Endothelial cell of umbilical vein (primary cell): ENCODE measurements at regions of chr7 and their contacts with region 1.

Region 1: GRCh38 chr7:30983042-30983913 is 19.5 kb downstream of the GHRHR start:
- DNase-seq: peak; percentile 75
- H3K4me3 ChIP-seq: no peak overlapping the region
- H3K27ac ChIP-seq: no peak overlapping the region
- H3K4me1 ChIP-seq: peaks cover 26% of the 10 kb centered on the region
- H3K27me3 ChIP-seq: peaks cover 4 to 5% of the 10 kb centered on the region in 2 experiments
- CTCF ChIP-seq: peak; percentile 80 to 99
- POLR2A ChIP-seq: no peak

Region 2: GRCh38 chr7:30800785-30801252 is 182.5 kb before region 1 on chr7:
- CTCF ChIA-PET with region 1: interaction called, 22 read pairs
- POLR2A ChIA-PET with region 1: no interaction called
- dilution Hi-C with region 1: no loop called
- intact Hi-C with region 1: loop called (anchors 1 kb)
- DNase-seq: peak; percentile 80
- H3K4me3 ChIP-seq: no peak overlapping the region
- H3K27ac ChIP-seq: no peak overlapping the region
- H3K4me1 ChIP-seq: peaks cover 58% of the 10 kb centered on the region
- H3K27me3 ChIP-seq: no peaks in the 10 kb centered on the region
- CTCF ChIP-seq: peak; percentile 62 to 70
- POLR2A ChIP-seq: no peak

Region 3: GRCh38 chr7:30996256-30996655 is 13.0 kb after region 1 on chr7:
- CTCF ChIA-PET with region 1: interaction called, 28 read pairs
- POLR2A ChIA-PET with region 1: no interaction called
- dilution Hi-C with region 1: no loop called
- intact Hi-C with region 1: no loop called
- DNase-seq: no peak
- H3K4me3 ChIP-seq: no peak overlapping the region
- H3K27ac ChIP-seq: no peak overlapping the region
- H3K4me1 ChIP-seq: no peaks in the 10 kb centered on the region
- H3K27me3 ChIP-seq: no peaks in the 10 kb centered on the region
- CTCF ChIP-seq: no peak
- POLR2A ChIP-seq: no peak

Region 4: DNA sequence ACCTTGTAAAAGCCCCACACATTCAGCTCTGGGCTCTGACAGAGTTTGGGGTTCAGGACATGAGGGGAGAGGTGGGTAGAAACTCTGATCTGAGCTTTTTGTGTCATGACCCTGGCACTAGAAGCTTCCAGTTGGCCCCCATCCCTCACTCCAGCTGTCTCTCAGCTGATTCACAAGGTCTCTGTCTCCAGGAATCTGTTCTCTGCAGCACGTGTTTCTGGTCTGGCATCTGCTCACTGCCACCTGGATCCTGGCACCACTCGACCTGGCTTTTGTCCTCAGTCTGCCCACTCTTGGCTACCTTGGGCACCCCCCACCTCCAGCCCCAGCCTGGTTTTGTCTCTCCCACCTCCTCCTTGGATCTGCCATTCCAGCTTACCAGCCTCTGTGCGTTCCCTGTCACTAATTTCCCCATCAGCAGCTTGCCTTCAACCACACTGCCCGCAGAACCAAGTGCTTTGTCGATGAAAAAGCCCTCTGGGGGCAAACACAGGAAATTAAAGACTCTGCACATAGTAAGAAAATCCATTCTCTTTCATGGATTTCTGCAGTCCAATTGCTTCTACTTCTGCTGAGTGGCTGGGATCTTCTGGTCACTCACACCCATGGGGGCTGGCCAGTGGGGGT is 50.5 kb after region 1 on chr7:
- CTCF ChIA-PET with region 1: interaction called, 13 read pairs
- POLR2A ChIA-PET with region 1: no interaction called
- dilution Hi-C with region 1: no loop called
- intact Hi-C with region 1: no loop called
- DNase-seq: no peak
- H3K4me3 ChIP-seq: no peak overlapping the region
- H3K27ac ChIP-seq: no peak overlapping the region
- H3K4me1 ChIP-seq: no peaks in the 10 kb centered on the region
- H3K27me3 ChIP-seq: peaks cover 2 to 8% of the 10 kb centered on the region in 2 experiments
- CTCF ChIP-seq: no peak
- POLR2A ChIP-seq: no peak

Region 5: GRCh38 chr7:31058122-31058521 is 74.8 kb after region 1 on chr7:
- CTCF ChIA-PET with region 1: interaction called, 13 read pairs
- POLR2A ChIA-PET with region 1: no interaction called
- dilution Hi-C with region 1: no loop called
- intact Hi-C with region 1: loop called (anchors 1 kb)
- DNase-seq: no peak
- H3K4me3 ChIP-seq: no peak overlapping the region
- H3K27ac ChIP-seq: no peak overlapping the region
- H3K4me1 ChIP-seq: no peaks in the 10 kb centered on the region
- H3K27me3 ChIP-seq: peaks cover 11 to 13% of the 10 kb centered on the region in 2 experiments
- CTCF ChIP-seq: no peak
- POLR2A ChIP-seq: no peak

Region 6: GRCh38 chr7:31114593-31115343 is 131.5 kb after region 1 on chr7:
- CTCF ChIA-PET with region 1: interaction called, 1,079 read pairs
- POLR2A ChIA-PET with region 1: no interaction called
- dilution Hi-C with region 1: no loop called
- intact Hi-C with region 1: no loop called
- DNase-seq: peak; percentile 49
- H3K4me3 ChIP-seq: no peak overlapping the region
- H3K27ac ChIP-seq: no peak overlapping the region
- H3K4me1 ChIP-seq: no peaks in the 10 kb centered on the region
- H3K27me3 ChIP-seq: peaks cover 0 to 11% of the 10 kb centered on the region in 2 experiments
- CTCF ChIP-seq: no peak
- POLR2A ChIP-seq: no peak